Panc1 (cell line): ENCODE measurements at regions of chr12 and their contacts with region 1.

Region 1: GRCh38 chr12:50620109-50620977 is 115.6 kb downstream of the DIP2B start:
- DNase-seq: no peak
- ATAC-seq: peak; percentile 50; the same call in 1 of the 2 replicates
- H3K4me3 ChIP-seq: no peak overlapping the region
- H3K27ac ChIP-seq: peak overlapping the region; percentile 80
- H3K4me1 ChIP-seq: peaks cover 57% of the 10 kb centered on the region
- H3K27me3 ChIP-seq: no peaks in the 10 kb centered on the region
- CTCF ChIP-seq: no peak

Region 2: GRCh38 chr12:50542448-50542847 is 77.9 kb before region 1 on chr12:
- CTCF ChIA-PET with region 1: no interaction called
- POLR2A ChIA-PET with region 1: no interaction called
- in situ Hi-C with region 1: no loop called
- intact Hi-C with region 1: no loop called
- DNase-seq: no peak
- ATAC-seq: no peak; the same call in 1 of the 2 replicates
- H3K4me3 ChIP-seq: no peak overlapping the region
- H3K27ac ChIP-seq: no peak overlapping the region
- H3K4me1 ChIP-seq: peaks cover 13% of the 10 kb centered on the region
- H3K27me3 ChIP-seq: no peaks in the 10 kb centered on the region
- CTCF ChIP-seq: no peak

Region 3: DNA sequence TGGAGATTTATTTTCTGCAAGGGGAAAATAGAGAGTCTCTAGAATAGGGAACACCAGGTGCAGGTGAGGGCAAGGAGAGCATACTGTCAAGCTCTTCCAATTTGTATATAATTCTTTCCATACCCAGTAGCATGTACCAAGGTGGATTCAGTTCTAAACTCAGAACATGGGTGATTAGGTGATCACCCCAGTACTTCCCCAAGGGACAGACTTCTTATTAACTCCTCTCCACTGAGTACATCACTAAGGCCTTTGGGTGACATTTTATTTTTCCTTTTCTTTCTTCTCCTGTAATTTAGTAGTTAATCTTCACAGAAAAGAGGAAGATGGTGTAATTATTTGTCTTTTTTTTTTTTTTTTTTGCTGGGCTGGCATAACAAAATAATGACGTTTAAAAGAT is 61.4 kb before region 1 on chr12:
- CTCF ChIA-PET with region 1: interaction called, 11 read pairs
- POLR2A ChIA-PET with region 1: interaction called, 4 read pairs
- in situ Hi-C with region 1: no loop called
- intact Hi-C with region 1: no loop called
- DNase-seq: no peak
- ATAC-seq: no peak
- H3K4me3 ChIP-seq: no peak overlapping the region
- H3K27ac ChIP-seq: no peak overlapping the region
- H3K4me1 ChIP-seq: peaks cover 2% of the 10 kb centered on the region; the same call in 1 of the 2 replicates
- H3K27me3 ChIP-seq: no peaks in the 10 kb centered on the region
- CTCF ChIP-seq: no peak

Region 4: GRCh38 chr12:50642035-50642451 is 21.7 kb after region 1 on chr12:
- CTCF ChIA-PET with region 1: no interaction called
- POLR2A ChIA-PET with region 1: no interaction called
- in situ Hi-C with region 1: no loop called
- intact Hi-C with region 1: no loop called
- DNase-seq: no peak
- ATAC-seq: no peak
- H3K4me3 ChIP-seq: no peak overlapping the region
- H3K27ac ChIP-seq: no peak overlapping the region
- H3K4me1 ChIP-seq: peaks cover 9% of the 10 kb centered on the region; the same call in 1 of the 2 replicates
- H3K27me3 ChIP-seq: no peaks in the 10 kb centered on the region
- CTCF ChIP-seq: no peak

Region 5: GRCh38 chr12:50661300-50662115 is 41.2 kb after region 1 on chr12:
- CTCF ChIA-PET with region 1: no interaction called
- POLR2A ChIA-PET with region 1: no interaction called
- in situ Hi-C with region 1: no loop called
- intact Hi-C with region 1: no loop called
- DNase-seq: no peak
- ATAC-seq: no peak
- H3K4me3 ChIP-seq: no peak overlapping the region
- H3K27ac ChIP-seq: no peak overlapping the region
- H3K4me1 ChIP-seq: no peaks in the 10 kb centered on the region; the same call in 1 of the 2 replicates
- H3K27me3 ChIP-seq: no peaks in the 10 kb centered on the region
- CTCF ChIP-seq: no peak

Region 6: GRCh38 chr12:50699940-50700339 is 79.6 kb after region 1 on chr12:
- CTCF ChIA-PET with region 1: interaction called, 19 read pairs
- POLR2A ChIA-PET with region 1: no interaction called
- in situ Hi-C with region 1: no loop called
- intact Hi-C with region 1: no loop called
- DNase-seq: no peak
- ATAC-seq: no peak
- H3K4me3 ChIP-seq: no peak overlapping the region
- H3K27ac ChIP-seq: no peak overlapping the region
- H3K4me1 ChIP-seq: no peaks in the 10 kb centered on the region
- H3K27me3 ChIP-seq: no peaks in the 10 kb centered on the region
- CTCF ChIP-seq: no peak